ENCODE measurements at regions of chr9 and their contacts with region 1.

Region 1: GRCh38 chr9:113150670-113151611 is at the start of gene SLC31A2:
- DNase-seq: peak; percentile 8
- ATAC-seq: peak; percentile 98
- H3K4me3 ChIP-seq: peak within 1 kb of the TSS; percentile 64 to 65
- H3K27ac ChIP-seq: peak within 1 kb of the TSS; percentile 63
- H3K4me1 ChIP-seq: peaks cover 4% of the 10 kb centered on the region
- H3K27me3 ChIP-seq: no peaks in the 10 kb centered on the region
- CTCF ChIP-seq: peak; percentile 68
- total RNA-seq, gene SLC31A2: 5.3 TPM

Region 2: GRCh38 chr9:112945620-112946208 is 205.2 kb before region 1 on chr9:
- CTCF ChIA-PET with region 1: interaction called, 13 read pairs
- POLR2A ChIA-PET with region 1: no interaction called
- in situ Hi-C with region 1: no loop called
- intact Hi-C with region 1: no loop called
- DNase-seq: no peak
- ATAC-seq: peak; percentile 65; the same call in 1 of the 2 replicates
- H3K4me3 ChIP-seq: no peak overlapping the region
- H3K27ac ChIP-seq: no peak overlapping the region
- H3K4me1 ChIP-seq: no peaks in the 10 kb centered on the region
- H3K27me3 ChIP-seq: no peaks in the 10 kb centered on the region
- CTCF ChIP-seq: peak; percentile 53